H1 (cell line): ENCODE measurements at regions of chr12 and their contacts with region 1.

Region 1: GRCh38 chr12:102891756-102892155 is 25.3 kb downstream of the PAH start:
- DNase-seq: no peak
- H3K4me3 ChIP-seq: no peak overlapping the region
- H3K27ac ChIP-seq: no peak overlapping the region
- H3K4me1 ChIP-seq: peaks cover 0 to 6% (median 5%) of the 10 kb centered on the region in 4 experiments; a peak in 6 of 7 replicates
- H3K27me3 ChIP-seq: no peaks in the 10 kb centered on the region; a peak in 1 of 7 replicates
- CTCF ChIP-seq: no peak
- EP300 ChIP-seq: no peak
- POLR2A ChIP-seq: no peak
- RAD21 ChIP-seq: no peak

Region 2: DNA sequence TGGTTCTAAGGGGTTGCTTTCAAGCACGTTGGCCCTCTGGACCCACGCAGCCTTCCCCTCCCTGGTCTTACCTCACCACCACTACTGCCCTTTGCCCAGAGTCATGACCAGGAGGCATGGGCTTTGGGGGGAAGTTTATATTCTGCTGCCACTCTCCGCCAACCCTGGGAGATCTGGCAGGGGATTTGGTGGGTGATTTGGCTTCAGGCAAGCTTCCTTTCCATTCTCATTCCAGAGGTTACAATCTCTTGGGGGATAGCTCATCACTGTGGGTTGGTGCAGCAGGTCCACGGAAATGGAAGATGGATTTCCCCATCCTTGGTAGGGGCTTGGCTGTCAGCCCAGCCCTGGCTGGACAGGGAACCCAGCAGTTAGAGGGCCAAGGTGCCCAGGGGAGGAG is 19.0 kb after region 1 on chr12:
- CTCF ChIA-PET with region 1: no interaction called
- POLR2A ChIA-PET with region 1: no interaction called
- DNase-seq: no peak
- H3K4me3 ChIP-seq: no peak overlapping the region
- H3K27ac ChIP-seq: no peak overlapping the region
- H3K4me1 ChIP-seq: no peaks in the 10 kb centered on the region
- H3K27me3 ChIP-seq: no peaks in the 10 kb centered on the region
- CTCF ChIP-seq: no peak
- EP300 ChIP-seq: no peak
- POLR2A ChIP-seq: no peak
- RAD21 ChIP-seq: no peak

Region 3: DNA sequence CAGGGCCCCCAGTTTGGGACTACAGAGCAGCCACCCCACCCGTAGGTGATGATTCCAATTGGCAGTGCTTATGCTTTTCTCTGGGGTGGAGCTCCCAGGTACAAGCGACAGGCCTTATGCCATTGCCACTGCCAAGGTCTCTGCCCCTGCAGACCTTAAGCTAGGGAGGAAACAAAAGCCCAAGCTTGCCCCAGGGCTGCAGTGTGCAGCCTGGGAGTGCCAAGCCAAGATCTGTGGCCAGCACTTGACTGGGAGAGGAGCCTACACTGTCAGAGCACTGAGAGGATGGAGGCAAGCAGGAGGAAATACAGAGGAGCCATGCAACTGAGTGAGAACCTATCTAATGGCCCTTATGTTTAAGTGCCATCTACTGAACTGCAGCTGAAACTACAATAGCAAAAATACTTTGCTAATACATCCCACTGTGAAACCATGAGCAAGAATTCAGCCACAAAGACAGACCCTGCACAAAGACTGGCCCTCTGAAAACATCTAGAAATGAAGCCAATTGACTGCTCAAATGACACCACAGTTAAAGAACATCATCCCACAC is 48.0 kb after region 1 on chr12:
- CTCF ChIA-PET with region 1: interaction called, 19 read pairs
- POLR2A ChIA-PET with region 1: no interaction called
- DNase-seq: no peak
- H3K4me3 ChIP-seq: no peak overlapping the region
- H3K27ac ChIP-seq: no peak overlapping the region
- H3K4me1 ChIP-seq: no peaks in the 10 kb centered on the region; a peak in 1 of 7 replicates
- H3K27me3 ChIP-seq: no peaks in the 10 kb centered on the region
- CTCF ChIP-seq: peak in 2 of 3 experiments; percentile 44 to 59; a peak in 3 of 4 replicates
- EP300 ChIP-seq: no peak
- POLR2A ChIP-seq: no peak
- RAD21 ChIP-seq: peak; percentile 77